CD8-positive, alpha-beta T cell (primary cell): ENCODE measurements at regions of chrX and their contacts with region 1.

Region 1: GRCh38 chrX:41923257-41923969 is at the start of gene CASK:
- DNase-seq: peak; percentile 74 to 94 (median 86)
- ATAC-seq: peak; percentile 78
- H3K4me3 ChIP-seq: peak within 1 kb of the TSS; percentile 76 to 78
- H3K4me3 Mint-ChIP-seq: peak within 1 kb of the TSS; percentile 93
- H3K27ac ChIP-seq: peak within 1 kb of the TSS; percentile 60 to 65
- H3K27ac Mint-ChIP-seq: peak within 1 kb of the TSS; percentile 88
- H3K4me1 ChIP-seq: no peaks in the 10 kb centered on the region
- H3K4me1 Mint-ChIP-seq: peaks cover 33% of the 10 kb centered on the region
- H3K27me3 ChIP-seq: no peaks in the 10 kb centered on the region
- H3K27me3 Mint-ChIP-seq: no peaks in the 10 kb centered on the region
- CTCF ChIP-seq: no peak
- total RNA-seq, gene CASK: 45.4 to 46.8 TPM

Region 2: GRCh38 chrX:41333744-41334259 is 589.6 kb before region 1 on chrX and contains the start of gene DDX3X:
- CTCF ChIA-PET with region 1: no interaction called
- POLR2A ChIA-PET with region 1: no interaction called
- intact Hi-C with region 1: loop called in 1 of 2 experiments (anchors 5 kb)
- DNase-seq: peak; percentile 58 to 95 (median 81)
- ATAC-seq: peak; percentile 55
- H3K4me3 ChIP-seq: peak within 1 kb of the TSS; percentile 93 to 100
- H3K4me3 Mint-ChIP-seq: peak within 1 kb of the TSS; percentile 95
- H3K27ac ChIP-seq: peak within 1 kb of the TSS; percentile 99
- H3K27ac Mint-ChIP-seq: peak within 1 kb of the TSS; percentile 99
- H3K4me1 ChIP-seq: peaks cover 14% of the 10 kb centered on the region
- H3K4me1 Mint-ChIP-seq: peaks cover 33% of the 10 kb centered on the region
- H3K27me3 ChIP-seq: no peaks in the 10 kb centered on the region
- H3K27me3 Mint-ChIP-seq: no peaks in the 10 kb centered on the region
- CTCF ChIP-seq: peak; percentile 23
- total RNA-seq, gene DDX3X: 643 to 648 TPM

Region 3: DNA sequence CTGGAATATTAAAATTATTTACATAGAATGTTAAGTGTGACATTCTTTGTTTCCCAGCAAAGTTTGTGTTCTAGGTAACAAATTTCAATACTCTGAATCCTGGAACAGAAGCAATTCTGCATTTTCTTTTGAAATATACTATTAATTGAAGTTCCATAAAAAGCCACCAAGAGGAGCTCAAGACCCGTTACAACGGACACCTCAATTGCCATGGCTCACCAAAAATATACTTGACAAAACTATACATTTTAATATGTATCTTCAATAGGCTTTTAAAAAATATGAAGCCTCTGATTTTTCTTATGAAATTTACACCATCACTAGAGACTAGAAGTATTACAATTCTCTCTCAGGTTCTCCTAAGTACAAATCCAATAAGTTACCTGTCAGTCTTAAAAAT is 364.9 kb before region 1 on chrX:
- CTCF ChIA-PET with region 1: no interaction called
- POLR2A ChIA-PET with region 1: no interaction called
- intact Hi-C with region 1: loop called in 1 of 2 experiments (anchors 10 kb)
- DNase-seq: peak in 2 of 9 experiments; percentile 35 to 50
- ATAC-seq: no peak
- H3K4me3 ChIP-seq: no peak overlapping the region
- H3K4me3 Mint-ChIP-seq: no peak overlapping the region
- H3K27ac ChIP-seq: no peak overlapping the region
- H3K27ac Mint-ChIP-seq: no peak overlapping the region
- H3K4me1 ChIP-seq: peaks cover 28% of the 10 kb centered on the region
- H3K4me1 Mint-ChIP-seq: peaks cover 48% of the 10 kb centered on the region
- H3K27me3 ChIP-seq: no peaks in the 10 kb centered on the region
- H3K27me3 Mint-ChIP-seq: no peaks in the 10 kb centered on the region
- CTCF ChIP-seq: no peak

Region 4: DNA sequence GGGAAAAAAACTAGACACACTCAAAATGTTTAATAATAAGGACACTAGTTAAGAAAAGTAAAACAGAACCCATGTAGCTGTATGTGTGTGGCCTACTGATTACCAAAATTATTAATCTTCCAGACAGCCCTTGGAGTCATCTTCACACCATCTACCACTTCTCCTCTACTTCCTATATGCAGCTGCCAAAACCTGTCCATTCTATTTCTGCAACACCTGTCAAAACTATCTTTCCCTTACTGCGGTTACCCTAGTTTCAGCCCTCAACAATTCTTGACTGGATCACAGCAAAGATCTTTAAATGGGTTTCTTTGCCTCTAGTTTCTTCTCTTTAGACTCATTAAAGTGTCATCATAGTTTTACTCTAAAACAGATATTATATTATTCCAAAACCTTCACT is 126.8 kb before region 1 on chrX:
- CTCF ChIA-PET with region 1: interaction called, 5 read pairs
- POLR2A ChIA-PET with region 1: interaction called, 3 read pairs
- intact Hi-C with region 1: loop called in 1 of 2 experiments (anchors 5 kb)
- DNase-seq: peak in 2 of 9 experiments; percentile 8
- ATAC-seq: no peak
- H3K4me3 ChIP-seq: no peak overlapping the region
- H3K4me3 Mint-ChIP-seq: no peak overlapping the region
- H3K27ac ChIP-seq: no peak overlapping the region
- H3K27ac Mint-ChIP-seq: peak overlapping the region; percentile 56
- H3K4me1 ChIP-seq: peaks cover 13% of the 10 kb centered on the region
- H3K4me1 Mint-ChIP-seq: peaks cover 37% of the 10 kb centered on the region
- H3K27me3 ChIP-seq: no peaks in the 10 kb centered on the region
- H3K27me3 Mint-ChIP-seq: no peaks in the 10 kb centered on the region
- CTCF ChIP-seq: no peak

Region 5: GRCh38 chrX:41909068-41909467 is 14.3 kb before region 1 on chrX:
- CTCF ChIA-PET with region 1: no interaction called
- POLR2A ChIA-PET with region 1: interaction called, 4 read pairs
- intact Hi-C with region 1: loop called (anchors 1 to 2 kb)
- DNase-seq: peak in 3 of 9 experiments; percentile 23 to 60 (median 42)
- ATAC-seq: peak; percentile 77
- H3K4me3 ChIP-seq: no peak overlapping the region
- H3K4me3 Mint-ChIP-seq: peak overlapping the region; percentile 26
- H3K27ac ChIP-seq: peak overlapping the region in 1 of 2 experiments; percentile 32
- H3K27ac Mint-ChIP-seq: peak overlapping the region; percentile 64
- H3K4me1 ChIP-seq: peaks cover 26% of the 10 kb centered on the region
- H3K4me1 Mint-ChIP-seq: peaks cover 59% of the 10 kb centered on the region
- H3K27me3 ChIP-seq: no peaks in the 10 kb centered on the region
- H3K27me3 Mint-ChIP-seq: no peaks in the 10 kb centered on the region
- CTCF ChIP-seq: no peak

Region 6: DNA sequence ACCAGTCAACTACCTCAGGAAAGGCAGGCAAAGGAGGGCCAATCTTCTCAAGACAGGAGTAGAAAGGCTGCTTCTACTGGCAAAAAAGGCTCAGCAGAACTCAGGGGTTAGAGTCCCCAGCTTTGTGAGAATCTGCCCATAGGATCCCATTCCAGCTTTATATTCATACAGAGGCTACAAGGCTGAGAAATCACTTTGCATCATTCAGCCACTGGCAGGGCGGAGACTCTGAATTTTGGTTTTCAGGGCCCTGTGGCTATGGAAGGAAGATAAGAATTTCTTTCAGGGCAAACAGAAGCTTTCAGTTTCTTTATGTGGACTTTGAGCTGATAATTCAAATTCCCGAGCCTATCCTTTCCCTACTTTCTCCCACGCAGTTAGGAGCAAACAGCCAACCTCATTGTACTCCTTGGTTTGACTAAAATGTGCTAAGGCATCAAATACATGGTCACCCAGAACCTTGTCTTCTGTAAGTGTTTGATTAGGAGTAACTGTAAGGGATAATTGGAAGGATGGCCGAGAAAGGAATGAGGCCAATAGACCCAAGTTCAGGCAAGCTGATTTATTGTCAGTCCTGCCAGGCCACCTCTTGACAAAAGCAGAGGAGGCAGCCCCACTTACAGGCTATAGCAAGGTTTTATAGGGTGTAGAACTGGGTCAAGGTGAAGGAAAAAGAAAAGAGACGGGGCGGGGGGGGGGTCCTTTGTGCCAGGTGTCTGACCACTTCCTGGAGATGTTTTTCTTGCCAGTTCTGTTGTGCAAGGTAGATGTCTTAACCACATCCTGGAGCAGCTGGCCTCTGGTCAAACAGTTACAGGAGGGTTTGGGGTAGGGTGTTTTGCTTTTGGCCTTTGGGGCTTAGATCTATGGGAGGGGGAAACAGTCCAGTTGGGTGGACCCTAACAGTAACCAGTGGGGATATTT is 1019.9 kb after region 1 on chrX:
- CTCF ChIA-PET with region 1: interaction called, 3 read pairs
- POLR2A ChIA-PET with region 1: interaction called, 7 read pairs
- intact Hi-C with region 1: loop called in 1 of 2 experiments (anchors 5 kb)
- DNase-seq: peak in 7 of 9 experiments; percentile 15 to 81 (median 49)
- ATAC-seq: peak; percentile 33
- H3K4me3 ChIP-seq: peak overlapping the region in 1 of 2 experiments; percentile 7
- H3K4me3 Mint-ChIP-seq: peak overlapping the region; percentile 42
- H3K27ac ChIP-seq: peak overlapping the region; percentile 53 to 82
- H3K27ac Mint-ChIP-seq: peak overlapping the region; percentile 90
- H3K4me1 ChIP-seq: peaks cover 91% of the 10 kb centered on the region
- H3K4me1 Mint-ChIP-seq: peaks cover 91% of the 10 kb centered on the region
- H3K27me3 ChIP-seq: no peaks in the 10 kb centered on the region
- H3K27me3 Mint-ChIP-seq: no peaks in the 10 kb centered on the region
- CTCF ChIP-seq: no peak

Region 7: DNA sequence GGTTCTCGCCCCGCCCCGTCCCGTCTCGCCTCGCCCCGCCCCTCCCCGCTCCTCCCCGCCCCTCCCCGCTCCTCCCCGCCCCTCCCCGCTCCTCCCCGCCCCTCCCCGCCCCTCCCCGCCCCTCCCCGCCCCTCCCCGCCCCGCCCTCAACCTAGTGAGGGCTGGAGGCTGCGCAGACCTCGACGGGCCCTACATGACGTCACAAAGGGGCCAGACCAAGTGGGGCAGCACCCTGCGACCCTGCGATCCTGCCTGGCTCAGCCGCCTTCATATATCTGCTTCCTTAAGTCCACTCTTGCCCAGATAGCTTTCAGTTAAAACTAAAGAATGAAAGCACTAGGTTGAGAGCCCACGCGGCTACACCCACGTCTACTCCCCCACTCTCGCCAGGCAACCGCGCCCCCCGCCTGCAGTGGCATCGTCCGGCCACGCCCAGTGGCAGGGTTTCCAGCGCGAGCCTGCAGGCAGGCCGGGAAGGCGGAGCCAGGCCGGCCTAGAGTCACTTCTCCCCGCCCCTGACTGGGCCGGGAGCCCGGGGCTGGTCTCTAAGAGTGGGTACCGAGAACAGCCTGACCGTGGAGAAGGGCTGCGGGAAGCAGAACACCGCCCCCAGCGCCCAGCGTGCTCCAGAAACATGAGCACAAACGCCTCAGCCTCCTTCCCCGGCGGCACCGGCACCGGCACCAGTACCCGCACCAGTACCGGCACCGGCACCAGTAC is 1731.2 kb after region 1 on chrX:
- CTCF ChIA-PET with region 1: no interaction called
- POLR2A ChIA-PET with region 1: no interaction called
- intact Hi-C with region 1: loop called in 1 of 2 experiments (anchors 5 kb)
- DNase-seq: peak; percentile 70 to 93 (median 84)
- ATAC-seq: peak; percentile 88
- H3K4me3 ChIP-seq: peak overlapping the region; percentile 66 to 72
- H3K4me3 Mint-ChIP-seq: peak overlapping the region; percentile 90
- H3K27ac ChIP-seq: peak overlapping the region; percentile 88 to 89
- H3K27ac Mint-ChIP-seq: peak overlapping the region; percentile 98
- H3K4me1 ChIP-seq: peaks cover 3% of the 10 kb centered on the region
- H3K4me1 Mint-ChIP-seq: peaks cover 10% of the 10 kb centered on the region
- H3K27me3 ChIP-seq: no peaks in the 10 kb centered on the region
- H3K27me3 Mint-ChIP-seq: no peaks in the 10 kb centered on the region
- CTCF ChIP-seq: no peak